ENCODE measurements at regions of chr3 and their contacts with region 1.

Region 1: DNA sequence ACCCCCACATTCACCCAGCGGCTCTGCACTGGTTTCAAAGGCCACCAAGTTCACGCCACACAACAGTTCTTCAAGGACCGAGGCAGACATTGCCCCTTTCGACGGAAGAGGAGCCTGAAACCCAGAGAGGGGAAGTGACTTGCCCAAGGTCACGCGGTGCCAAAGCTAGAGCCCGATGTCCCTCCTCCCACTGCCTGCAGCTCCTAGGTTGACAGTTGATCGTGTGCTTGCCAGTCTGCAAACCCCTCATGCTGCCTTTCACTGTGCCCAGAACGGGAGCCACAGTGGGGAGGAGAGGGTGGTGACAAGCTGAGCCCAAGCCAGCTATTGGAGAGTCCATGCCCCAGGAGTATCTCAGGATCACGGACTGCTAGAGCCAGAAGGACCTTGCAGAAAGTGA is 230.9 kb downstream of the XXYLT1 start:
- DNase-seq: no peak
- ATAC-seq: no peak; the same call in 1 of the 2 replicates
- H3K4me3 ChIP-seq: no peak overlapping the region
- H3K27ac ChIP-seq: no peak overlapping the region
- H3K4me1 ChIP-seq: peaks cover 10 to 30% of the 10 kb centered on the region in 2 experiments
- H3K27me3 ChIP-seq: no peaks in the 10 kb centered on the region
- CTCF ChIP-seq: no peak
- POLR2A ChIP-seq: no peak
- RAD21 ChIP-seq: no peak

Region 2: DNA sequence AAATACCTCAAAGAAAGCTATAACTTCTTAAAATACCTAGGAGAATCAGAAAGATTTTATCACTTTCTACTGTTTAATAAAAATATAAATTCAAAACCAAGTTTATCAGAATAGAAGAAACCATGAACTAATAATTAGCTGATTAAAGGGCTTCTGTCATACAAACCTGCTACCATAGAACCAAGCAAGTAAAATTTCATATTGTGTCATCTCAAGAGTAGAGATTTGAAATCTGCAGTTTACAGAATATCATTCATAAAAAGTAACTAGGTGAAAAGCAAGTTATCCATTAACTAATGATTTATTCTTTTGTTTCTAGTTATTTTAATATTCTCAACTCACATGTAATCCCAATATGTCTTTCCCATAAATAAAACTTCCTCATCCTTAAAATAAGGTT is 267.6 kb after region 1 on chr3:
- CTCF ChIA-PET with region 1: no interaction called
- POLR2A ChIA-PET with region 1: no interaction called
- RAD21 ChIA-PET with region 1: no interaction called
- intact Hi-C with region 1: loop called (anchors 5 kb)
- DNase-seq: no peak
- ATAC-seq: no peak
- H3K4me3 ChIP-seq: no peak overlapping the region
- H3K27ac ChIP-seq: no peak overlapping the region
- H3K4me1 ChIP-seq: 0 out of 4 replicates have a peak, but pooled peaks cover 0 to 4% of the 10 kb centered on the region in 2 experiments
- H3K27me3 ChIP-seq: no peaks in the 10 kb centered on the region
- CTCF ChIP-seq: no peak
- POLR2A ChIP-seq: no peak
- RAD21 ChIP-seq: no peak

Region 3: GRCh38 chr3:195732940-195733339 is 692.9 kb after region 1 on chr3:
- CTCF ChIA-PET with region 1: no interaction called
- POLR2A ChIA-PET with region 1: no interaction called
- RAD21 ChIA-PET with region 1: no interaction called
- intact Hi-C with region 1: no loop called
- DNase-seq: no peak
- ATAC-seq: no peak
- H3K4me3 ChIP-seq: no peak overlapping the region
- H3K27ac ChIP-seq: no peak overlapping the region
- H3K4me1 ChIP-seq: peaks cover 0 to 4% of the 10 kb centered on the region in 2 experiments; a peak in 1 of 4 replicates
- H3K27me3 ChIP-seq: no peaks in the 10 kb centered on the region
- CTCF ChIP-seq: no peak
- POLR2A ChIP-seq: no peak
- RAD21 ChIP-seq: no peak